HCT116 (cell line): ENCODE measurements at regions of chr19 and their contacts with region 1.

Region 1: DNA sequence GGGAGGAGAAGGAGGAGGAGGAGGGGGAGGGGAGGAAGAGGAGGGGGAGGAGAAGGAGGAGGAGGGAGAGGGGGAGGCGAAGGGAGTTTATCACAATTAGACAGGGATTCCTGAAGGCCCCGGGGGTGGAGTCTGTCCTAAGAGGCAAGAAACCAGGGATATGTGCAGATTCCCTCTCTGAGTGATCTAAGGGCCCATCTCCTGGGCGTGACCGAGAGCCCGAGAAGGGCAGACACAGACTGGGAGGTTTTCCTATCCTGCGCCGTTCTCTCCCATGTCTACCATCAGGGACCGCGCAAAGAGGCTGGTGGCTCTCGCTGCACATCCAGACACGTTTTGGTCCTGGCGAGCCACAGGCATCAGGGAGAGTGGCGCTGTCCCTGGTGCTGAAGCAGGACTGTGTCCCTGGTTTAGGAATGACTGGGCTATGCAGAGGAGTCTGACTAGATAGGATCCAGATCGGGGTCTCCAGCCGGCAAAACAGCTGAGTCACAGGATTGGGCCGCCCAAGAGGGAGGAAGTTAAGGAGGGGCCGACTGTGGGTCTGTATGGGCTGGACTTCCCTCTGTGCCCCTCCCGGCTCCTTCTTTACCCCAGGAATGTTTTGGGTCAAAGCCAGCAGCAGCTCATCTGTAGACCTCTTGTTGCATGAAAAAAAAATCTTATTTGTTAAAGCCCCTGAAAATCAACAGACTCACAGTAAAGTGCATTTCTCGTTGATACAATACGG is 17.9 kb upstream of the ZNF175 start:
- DNase-seq: peak; percentile 13
- ATAC-seq: peak; percentile 80
- H3K4me3 ChIP-seq: no peak overlapping the region
- H3K27ac ChIP-seq: no peak overlapping the region
- H3K4me1 ChIP-seq: no peaks in the 10 kb centered on the region
- H3K27me3 ChIP-seq: peaks cover 26% of the 10 kb centered on the region
- CTCF ChIP-seq: no peak
- POLR2A ChIP-seq: no peak
- RAD21 ChIP-seq: no peak

Region 2: GRCh38 chr19:51422053-51422448 is 131.1 kb before region 1 on chr19:
- CTCF ChIA-PET with region 1: no interaction called
- POLR2A ChIA-PET with region 1: no interaction called
- RAD21 ChIA-PET with region 1: no interaction called
- intact Hi-C with region 1: loop called (anchors 5 kb)
- DNase-seq: peak; percentile 56
- ATAC-seq: peak; percentile 96
- H3K4me3 ChIP-seq: no peak overlapping the region
- H3K27ac ChIP-seq: no peak overlapping the region
- H3K4me1 ChIP-seq: no peaks in the 10 kb centered on the region; a peak in 1 of 4 replicates
- H3K27me3 ChIP-seq: peaks cover 16% of the 10 kb centered on the region; the same call in 1 of the 2 replicates
- CTCF ChIP-seq: peak; percentile 82 to 100 (median 97)
- POLR2A ChIP-seq: no peak
- RAD21 ChIP-seq: peak; percentile 81

Region 3: DNA sequence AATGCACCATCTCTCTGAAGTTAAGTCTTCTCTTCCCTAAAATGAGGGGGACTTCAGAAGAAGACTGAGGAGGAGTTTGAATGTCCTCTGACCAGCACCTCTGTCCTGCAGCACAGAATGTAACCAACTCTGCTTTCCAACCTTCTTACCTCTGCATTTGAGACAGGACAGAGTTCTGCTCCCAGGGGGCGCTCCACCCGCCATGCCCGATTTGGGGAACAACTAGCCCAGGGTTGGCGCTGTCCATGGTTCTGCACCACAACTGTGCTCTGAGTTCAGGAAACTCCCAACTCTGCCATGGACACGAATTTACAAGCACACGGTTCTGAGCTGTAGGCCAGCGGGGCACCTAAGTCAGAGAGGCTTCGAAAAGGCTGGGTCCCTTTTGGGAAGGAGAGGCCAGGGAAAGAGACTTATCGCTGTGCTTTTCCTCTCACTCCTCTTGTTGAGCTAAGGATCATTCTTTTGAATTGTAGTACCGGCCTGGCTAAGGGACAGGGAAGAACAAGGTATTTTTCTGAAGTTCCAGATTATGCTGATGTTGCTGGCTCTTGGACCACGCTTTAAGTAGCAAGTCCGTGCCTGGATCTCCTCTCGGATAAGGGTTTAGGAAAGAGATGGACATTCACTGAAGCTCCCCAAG is 54.9 kb after region 1 on chr19:
- CTCF ChIA-PET with region 1: no interaction called
- POLR2A ChIA-PET with region 1: no interaction called
- RAD21 ChIA-PET with region 1: no interaction called
- intact Hi-C with region 1: loop called (anchors 1 kb)
- DNase-seq: peak; percentile 64
- ATAC-seq: peak; percentile 97
- H3K4me3 ChIP-seq: no peak overlapping the region
- H3K27ac ChIP-seq: no peak overlapping the region
- H3K4me1 ChIP-seq: no peaks in the 10 kb centered on the region
- H3K27me3 ChIP-seq: peaks cover 45% of the 10 kb centered on the region
- CTCF ChIP-seq: peak; percentile 72 to 93 (median 91); a peak in 5 of 6 replicates
- POLR2A ChIP-seq: no peak
- RAD21 ChIP-seq: peak; percentile 52